HepG2 (cell line): ENCODE measurements at regions of chr2 and their contacts with region 1.

Region 1: GRCh38 chr2:197515739-197516392 is at the start of gene MOB4:
- DNase-seq: peak; percentile 93
- ATAC-seq: peak; percentile 96
- H3K4me3 ChIP-seq: peak within 1 kb of the TSS; percentile 89 to 98 (median 91)
- H3K27ac ChIP-seq: peak within 1 kb of the TSS; percentile 77
- H3K4me1 ChIP-seq: peaks cover 45% of the 10 kb centered on the region
- H3K27me3 ChIP-seq: no peaks in the 10 kb centered on the region; a peak in 1 of 5 replicates
- CTCF ChIP-seq: peak; percentile 53
- EP300 ChIP-seq: peak; percentile 88 to 100
- POLR2A ChIP-seq: peak; percentile 96 to 97
- RAD21 ChIP-seq: peak; percentile 81
- total RNA-seq, gene MOB4: 38.6 and 68.3 TPM in 2 replicates

Region 2: DNA sequence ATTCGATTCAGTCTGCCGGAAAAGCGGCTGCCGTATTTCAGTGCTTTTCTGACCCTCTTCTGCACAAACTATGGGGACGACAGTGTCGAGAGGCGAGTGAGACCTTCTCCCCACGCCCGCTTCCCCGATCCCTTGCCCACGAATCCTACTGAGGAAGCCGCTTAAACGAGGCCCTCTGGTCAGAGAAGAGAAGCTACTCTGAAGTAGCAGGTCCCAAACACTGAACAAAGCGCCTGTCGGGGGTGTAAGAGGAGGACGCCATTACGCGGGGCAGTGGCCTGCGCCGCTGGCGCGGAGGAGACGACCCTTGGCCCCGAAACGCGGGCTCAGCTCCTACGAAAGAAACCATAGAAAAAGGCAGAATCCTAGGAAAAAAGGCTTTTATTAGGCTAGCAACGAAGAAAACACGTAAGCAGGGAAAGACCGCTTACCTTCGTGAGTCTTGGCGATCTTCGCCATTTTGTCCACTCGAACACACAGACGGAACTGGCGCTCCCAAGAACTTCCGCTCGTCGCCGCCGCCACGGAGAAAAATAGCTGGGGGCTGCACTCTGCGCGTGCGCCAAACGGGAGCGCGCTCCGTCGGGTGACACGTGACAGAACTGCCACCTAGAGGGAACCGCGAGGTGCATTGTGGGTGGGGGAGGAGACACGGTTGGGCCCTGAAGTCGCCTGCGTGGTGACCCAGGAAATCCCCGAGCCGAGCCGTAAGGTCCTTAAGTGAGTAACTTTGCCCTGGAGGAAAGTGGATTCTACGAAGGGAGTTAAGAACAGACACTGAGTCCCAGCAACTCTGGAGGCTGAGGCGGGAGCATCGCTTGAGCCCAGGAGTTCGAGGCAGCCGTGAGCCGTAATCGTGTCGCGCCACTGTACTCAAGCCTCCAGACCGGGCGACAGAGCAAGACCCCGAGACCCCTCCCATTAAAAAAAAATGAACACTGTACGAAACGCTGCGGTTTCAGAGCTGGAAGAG is 81.0 kb before region 1 on chr2 and contains the start of gene SF3B1:
- CTCF ChIA-PET with region 1: no interaction called
- POLR2A ChIA-PET with region 1: interaction called, 28 read pairs
- in situ Hi-C with region 1: no loop called
- intact Hi-C with region 1: no loop called
- DNase-seq: peak; percentile 97
- ATAC-seq: peak; percentile 90
- H3K4me3 ChIP-seq: peak within 1 kb of the TSS; percentile 86 to 99 (median 99)
- H3K27ac ChIP-seq: peak within 1 kb of the TSS; percentile 95
- H3K4me1 ChIP-seq: peaks cover 52% of the 10 kb centered on the region
- H3K27me3 ChIP-seq: peaks cover 0 to 4% of the 10 kb centered on the region in 2 experiments; a peak in 1 of 5 replicates
- CTCF ChIP-seq: 0 out of 2 replicates have a peak, but pooled peaks have one; percentile 19
- EP300 ChIP-seq: peak in 1 of 2 experiments; percentile 48; a peak in 2 of 4 replicates
- POLR2A ChIP-seq: peak; percentile 97 to 98
- RAD21 ChIP-seq: peak; percentile 46
- total RNA-seq, gene SF3B1: 387 and 499 TPM in 2 replicates

Region 3: DNA sequence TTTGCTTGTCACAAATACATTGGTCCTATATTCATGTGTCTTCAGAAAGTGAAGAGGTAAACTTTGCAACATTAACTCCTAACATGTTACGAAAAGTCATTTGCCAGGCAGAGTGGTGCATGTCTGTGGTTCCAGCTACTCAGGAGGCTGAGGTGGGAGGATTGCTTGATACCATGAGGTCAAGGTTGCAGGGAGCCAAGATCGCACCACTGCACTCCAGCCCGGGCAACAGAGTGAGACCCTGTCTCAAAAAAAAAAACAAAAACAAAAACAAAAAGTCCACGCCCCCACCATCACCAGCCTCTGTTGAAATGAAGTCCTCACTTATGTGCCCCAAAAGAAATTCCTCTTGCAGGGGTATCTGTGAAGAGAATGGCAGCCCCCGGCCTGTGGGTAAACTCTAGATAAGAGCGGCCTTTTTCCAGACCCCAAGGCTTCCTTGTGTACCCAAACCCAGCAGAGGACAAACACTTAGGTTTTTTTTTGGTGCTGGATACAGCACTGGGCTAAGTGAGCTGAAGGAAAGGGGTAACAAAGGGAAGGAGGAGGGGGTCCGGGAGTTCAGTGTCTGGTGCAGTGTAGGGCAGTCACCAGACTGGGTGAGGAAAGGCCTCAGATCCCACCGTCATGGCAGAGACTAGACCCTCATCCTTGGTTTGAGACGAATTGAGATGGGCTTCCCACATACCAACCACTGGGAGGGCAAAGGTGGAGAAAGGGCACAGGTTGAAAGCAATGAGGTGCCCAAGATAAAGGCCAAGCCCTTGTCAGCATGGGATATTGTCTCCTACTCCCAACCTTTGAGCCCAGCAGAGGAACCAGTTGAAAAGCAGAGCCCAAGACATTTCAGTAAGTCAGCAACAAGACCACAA is 35.5 kb before region 1 on chr2:
- CTCF ChIA-PET with region 1: no interaction called
- POLR2A ChIA-PET with region 1: interaction called, 25 read pairs
- in situ Hi-C with region 1: no loop called
- intact Hi-C with region 1: no loop called
- DNase-seq: no peak
- ATAC-seq: peak; percentile 32
- H3K4me3 ChIP-seq: peak overlapping the region; percentile 26 to 63 (median 38); a peak in 5 of 6 replicates
- H3K27ac ChIP-seq: peak overlapping the region; percentile 91
- H3K4me1 ChIP-seq: peaks cover 69% of the 10 kb centered on the region
- H3K27me3 ChIP-seq: no peaks in the 10 kb centered on the region
- CTCF ChIP-seq: no peak
- EP300 ChIP-seq: no peak
- POLR2A ChIP-seq: no peak
- RAD21 ChIP-seq: no peak

Region 4: GRCh38 chr2:197538412-197538811 is 22.5 kb after region 1 on chr2:
- CTCF ChIA-PET with region 1: no interaction called
- POLR2A ChIA-PET with region 1: no interaction called
- in situ Hi-C with region 1: no loop called
- intact Hi-C with region 1: no loop called
- DNase-seq: no peak
- ATAC-seq: no peak
- H3K4me3 ChIP-seq: no peak overlapping the region
- H3K27ac ChIP-seq: no peak overlapping the region
- H3K4me1 ChIP-seq: no peaks in the 10 kb centered on the region
- H3K27me3 ChIP-seq: no peaks in the 10 kb centered on the region
- CTCF ChIP-seq: no peak
- EP300 ChIP-seq: no peak
- POLR2A ChIP-seq: no peak
- RAD21 ChIP-seq: no peak

Region 5: GRCh38 chr2:197615016-197615652 is 99.3 kb after region 1 on chr2:
- CTCF ChIA-PET with region 1: no interaction called
- POLR2A ChIA-PET with region 1: interaction called, 14 read pairs
- in situ Hi-C with region 1: no loop called
- intact Hi-C with region 1: no loop called
- DNase-seq: peak; percentile 27
- ATAC-seq: peak; percentile 57
- H3K4me3 ChIP-seq: no peak overlapping the region
- H3K27ac ChIP-seq: no peak overlapping the region
- H3K4me1 ChIP-seq: peaks cover 34% of the 10 kb centered on the region
- H3K27me3 ChIP-seq: peaks cover 1 to 40% of the 10 kb centered on the region in 2 experiments; a peak in 4 of 5 replicates
- CTCF ChIP-seq: peak; percentile 75
- EP300 ChIP-seq: no peak
- POLR2A ChIP-seq: no peak
- RAD21 ChIP-seq: no peak